ENCODE measurements at regions of chr15 and their contacts with region 1.

Region 1: GRCh38 chr15:89647191-89647851 is 7.9 kb downstream of the KIF7 start:
- DNase-seq: peak; percentile 95
- ATAC-seq: peak; percentile 90
- H3K4me3 Mint-ChIP-seq: peak overlapping the region; percentile 50
- H3K27ac Mint-ChIP-seq: no peak overlapping the region
- H3K4me1 Mint-ChIP-seq: 0 out of 2 replicates have a peak, but pooled peaks cover 3% of the 10 kb centered on the region
- H3K27me3 Mint-ChIP-seq: no peaks in the 10 kb centered on the region
- CTCF ChIP-seq: peak; percentile 89

Region 2: DNA sequence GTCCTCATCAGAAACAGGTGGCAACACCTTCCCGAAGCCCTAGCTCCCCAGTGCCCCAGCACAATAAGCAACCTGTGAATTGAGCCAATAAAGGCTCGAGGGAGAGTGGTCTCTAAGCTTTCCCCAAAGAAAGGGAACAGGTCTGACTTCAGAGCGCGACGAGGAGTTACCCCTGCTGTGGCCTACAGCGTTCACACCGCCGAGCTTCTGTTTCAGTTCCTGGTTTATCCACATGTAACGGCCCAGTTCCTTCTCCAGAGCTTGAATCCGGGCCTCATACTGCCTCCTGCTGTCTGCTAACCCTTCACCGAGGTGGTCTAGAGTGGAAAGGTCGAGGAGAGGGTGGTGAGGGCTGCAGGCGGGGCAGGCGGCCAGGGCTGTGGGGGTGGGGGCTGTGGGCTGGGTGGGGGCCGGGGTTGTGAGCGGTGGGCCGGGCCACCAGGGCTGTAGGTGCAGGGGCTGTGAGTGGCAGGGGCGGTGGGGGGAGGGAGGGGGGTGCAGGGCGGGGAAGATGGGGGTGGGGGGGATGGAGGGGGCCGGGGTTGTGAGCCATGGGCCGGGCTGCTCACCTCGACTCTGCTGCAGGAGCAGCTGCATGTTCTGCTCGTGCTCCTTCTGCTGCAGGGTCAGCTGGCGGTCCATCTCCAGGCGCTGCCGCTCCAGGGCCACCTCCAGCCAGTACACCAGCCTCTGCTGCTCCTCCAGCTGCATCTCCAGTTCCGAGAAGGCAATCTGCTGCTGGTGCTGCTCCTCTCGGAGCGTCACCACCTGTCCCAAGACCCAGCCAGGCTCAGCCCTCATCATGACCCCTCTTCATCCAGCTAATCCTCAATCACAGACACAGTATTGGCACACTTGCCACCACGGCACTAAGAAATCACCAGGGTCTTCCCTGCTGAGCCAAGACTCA is 18.3 kb before region 1 on chr15:
- CTCF ChIA-PET with region 1: interaction called, 11 read pairs
- POLR2A ChIA-PET with region 1: no interaction called
- DNase-seq: no peak
- ATAC-seq: no peak; the same call in 1 of the 2 replicates
- H3K4me3 Mint-ChIP-seq: no peak overlapping the region
- H3K27ac Mint-ChIP-seq: 0 out of 2 replicates have a peak overlapping the region, but pooled peaks have one; percentile 71
- H3K4me1 Mint-ChIP-seq: no peaks in the 10 kb centered on the region
- H3K27me3 Mint-ChIP-seq: peaks cover 4% of the 10 kb centered on the region
- CTCF ChIP-seq: no peak

Region 3: DNA sequence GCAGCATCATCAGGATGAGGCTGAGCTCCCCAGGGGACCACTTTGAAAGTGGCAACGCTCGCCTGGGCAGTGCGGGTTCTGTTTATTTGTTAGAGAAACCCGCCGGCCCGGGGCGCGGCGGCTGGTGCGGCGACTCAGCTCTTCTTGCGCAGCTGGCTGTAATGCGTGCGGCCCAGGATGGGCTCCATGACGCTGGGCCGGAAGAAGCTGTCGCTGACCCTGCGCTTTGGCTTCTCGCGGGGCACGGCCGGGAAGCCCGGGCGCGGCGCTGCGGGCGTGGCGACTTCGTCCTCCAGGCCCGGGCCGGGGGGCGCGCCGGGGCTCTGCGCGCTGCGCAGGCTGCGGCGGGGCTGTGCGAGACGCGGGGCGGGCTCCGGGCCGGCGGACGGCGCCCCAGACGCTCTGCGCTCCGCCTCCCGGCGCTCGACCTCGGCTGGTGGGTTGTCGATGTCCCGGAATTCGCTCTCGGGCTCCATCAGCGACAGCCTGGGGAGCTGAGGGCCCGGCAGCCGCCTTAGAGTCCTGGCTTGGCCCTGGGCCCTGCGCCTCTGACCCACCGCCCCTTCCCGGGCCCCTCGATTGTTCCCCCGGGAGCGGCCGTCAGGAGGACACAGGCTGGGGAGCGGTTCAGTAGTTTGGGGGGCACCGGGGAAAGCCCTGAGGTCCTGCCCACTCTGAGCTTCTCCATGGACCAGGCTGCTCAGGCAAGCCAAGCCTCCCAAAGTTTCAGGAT is 18.3 kb after region 1 on chr15:
- CTCF ChIA-PET with region 1: interaction called, 17 read pairs
- POLR2A ChIA-PET with region 1: no interaction called
- DNase-seq: peak; percentile 56
- ATAC-seq: peak; percentile 76
- H3K4me3 Mint-ChIP-seq: peak overlapping the region; percentile 63
- H3K27ac Mint-ChIP-seq: no peak overlapping the region
- H3K4me1 Mint-ChIP-seq: peaks cover 14% of the 10 kb centered on the region
- H3K27me3 Mint-ChIP-seq: peaks cover 20% of the 10 kb centered on the region
- CTCF ChIP-seq: no peak

Region 4: DNA sequence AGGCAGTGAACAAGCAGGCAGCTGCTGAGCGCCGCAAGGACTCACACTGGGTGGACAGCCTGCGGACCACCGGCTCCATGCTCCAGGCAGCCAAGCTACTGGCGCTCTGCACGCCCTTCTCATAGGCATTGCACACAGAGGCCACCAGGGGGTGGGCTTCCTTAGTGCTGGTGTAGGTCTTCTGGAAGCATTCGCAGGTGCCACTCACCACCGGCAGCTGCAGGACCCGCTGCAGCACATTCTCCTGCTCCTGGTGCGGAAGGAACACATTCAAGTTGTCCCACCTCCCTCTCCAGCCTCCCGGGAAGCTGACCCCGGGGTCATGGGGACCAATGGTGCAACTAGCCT is 25.8 kb after region 1 on chr15:
- CTCF ChIA-PET with region 1: interaction called, 17 read pairs
- POLR2A ChIA-PET with region 1: no interaction called
- DNase-seq: peak; percentile 86
- ATAC-seq: peak; percentile 96
- H3K4me3 Mint-ChIP-seq: no peak overlapping the region
- H3K27ac Mint-ChIP-seq: no peak overlapping the region
- H3K4me1 Mint-ChIP-seq: no peaks in the 10 kb centered on the region; the same call in 1 of the 2 replicates
- H3K27me3 Mint-ChIP-seq: peaks cover 2% of the 10 kb centered on the region; the same call in 1 of the 2 replicates
- CTCF ChIP-seq: peak; percentile 67

Region 5: GRCh38 chr15:89820666-89821611 is 173.6 kb after region 1 on chr15:
- CTCF ChIA-PET with region 1: no interaction called
- POLR2A ChIA-PET with region 1: no interaction called
- DNase-seq: no peak
- ATAC-seq: no peak
- H3K4me3 Mint-ChIP-seq: no peak overlapping the region
- H3K27ac Mint-ChIP-seq: no peak overlapping the region
- H3K4me1 Mint-ChIP-seq: 0 out of 2 replicates have a peak, but pooled peaks cover 7% of the 10 kb centered on the region
- H3K27me3 Mint-ChIP-seq: peaks cover 13% of the 10 kb centered on the region
- CTCF ChIP-seq: no peak

Region 6: DNA sequence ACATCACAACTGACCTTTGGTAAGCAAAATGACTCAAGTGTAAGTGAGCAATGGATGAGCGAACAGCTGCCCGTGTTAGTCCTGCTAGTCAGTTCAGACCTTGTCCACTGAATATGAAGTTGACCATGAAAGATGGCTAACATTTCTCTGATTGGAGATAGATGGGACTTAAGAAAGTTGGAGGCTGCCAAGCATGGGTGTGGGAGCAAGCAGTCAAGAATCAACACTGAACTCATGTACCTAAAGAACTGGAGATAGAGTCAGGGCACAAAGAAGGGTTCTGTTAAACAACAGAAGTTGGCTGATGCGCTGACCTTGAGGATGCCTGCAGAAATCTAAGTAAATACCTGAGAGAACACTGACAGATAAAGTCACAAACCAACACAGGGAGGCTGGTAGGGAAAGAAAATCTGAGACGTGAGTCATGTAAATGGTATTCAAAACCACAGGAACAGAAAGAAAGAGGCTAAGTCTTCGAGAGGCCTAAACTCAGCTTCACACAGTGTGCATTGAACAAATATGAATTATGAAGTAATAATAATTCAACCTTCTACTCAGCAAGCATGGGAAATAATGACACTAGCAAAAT is 198.1 kb after region 1 on chr15:
- CTCF ChIA-PET with region 1: no interaction called
- POLR2A ChIA-PET with region 1: interaction called, 12 read pairs
- DNase-seq: no peak
- ATAC-seq: no peak
- H3K4me3 Mint-ChIP-seq: no peak overlapping the region
- H3K27ac Mint-ChIP-seq: no peak overlapping the region
- H3K4me1 Mint-ChIP-seq: no peaks in the 10 kb centered on the region
- H3K27me3 Mint-ChIP-seq: no peaks in the 10 kb centered on the region
- CTCF ChIP-seq: no peak